ENCODE measurements at regions of chr5 and their contacts with region 1.

Region 1: GRCh38 chr5:167723254-167723871 is 568.1 kb upstream of the WWC1 start:
- DNase-seq: peak; percentile 70
- CTCF ChIP-seq: peak; percentile 79

Region 2: GRCh38 chr5:167712986-167713585 is 10.3 kb before region 1 on chr5:
- CTCF ChIA-PET with region 1: interaction called, 17 read pairs
- POLR2A ChIA-PET with region 1: no interaction called
- DNase-seq: no peak
- CTCF ChIP-seq: no peak

Measured in GM10248 (cell line).